ENCODE measurements at regions of chr9 and their contacts with region 1.

Region 1: DNA sequence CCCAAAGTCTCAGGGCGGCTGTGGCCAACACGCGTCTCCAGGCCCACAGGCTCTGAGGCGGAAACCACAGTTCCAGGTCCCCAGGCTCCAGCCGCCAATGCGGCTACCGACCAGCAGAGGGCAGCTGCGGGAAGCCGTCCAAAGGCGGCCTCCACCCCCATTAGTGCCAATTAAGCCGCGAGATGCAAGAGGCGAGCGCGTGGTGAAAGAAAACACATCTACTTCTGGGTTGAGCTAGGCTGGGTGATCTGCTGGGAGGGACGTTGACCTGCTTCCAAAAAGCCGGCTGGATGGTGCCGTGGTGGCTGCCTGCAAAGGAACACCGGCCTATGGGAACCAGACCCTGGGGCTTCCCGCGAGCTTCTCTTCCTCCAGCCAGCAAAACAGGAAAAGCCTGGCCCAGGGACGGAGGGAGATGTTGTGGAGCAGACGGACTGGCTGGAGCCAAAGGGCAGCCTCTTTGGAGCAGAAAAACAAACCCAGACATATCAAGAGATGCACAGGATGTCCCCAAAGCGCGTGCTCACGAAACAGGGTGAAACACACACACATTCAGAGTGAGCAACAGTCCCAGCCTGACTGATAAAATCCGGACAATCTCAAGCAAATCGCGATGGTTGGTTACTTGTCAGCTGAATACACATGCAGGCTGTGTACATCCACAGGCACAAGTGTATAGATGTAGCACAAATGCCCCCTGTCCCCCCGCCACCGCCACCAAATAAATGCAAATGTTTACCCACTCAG is 187.1 kb upstream of the BRINP1 start:
- DNase-seq: peak; percentile 68
- H3K4me3 Mint-ChIP-seq: no peak overlapping the region
- H3K27ac Mint-ChIP-seq: no peak overlapping the region
- H3K4me1 Mint-ChIP-seq: peaks cover 3% of the 10 kb centered on the region
- H3K27me3 Mint-ChIP-seq: peaks cover 32% of the 10 kb centered on the region

Region 2: GRCh38 chr9:119810645-119811429 is 254.5 kb after region 1 on chr9:
- CTCF ChIA-PET with region 1: no interaction called
- intact Hi-C with region 1: no loop called
- DNase-seq: no peak
- H3K4me3 Mint-ChIP-seq: no peak overlapping the region
- H3K27ac Mint-ChIP-seq: no peak overlapping the region
- H3K4me1 Mint-ChIP-seq: no peaks in the 10 kb centered on the region
- H3K27me3 Mint-ChIP-seq: no peaks in the 10 kb centered on the region

Region 3: DNA sequence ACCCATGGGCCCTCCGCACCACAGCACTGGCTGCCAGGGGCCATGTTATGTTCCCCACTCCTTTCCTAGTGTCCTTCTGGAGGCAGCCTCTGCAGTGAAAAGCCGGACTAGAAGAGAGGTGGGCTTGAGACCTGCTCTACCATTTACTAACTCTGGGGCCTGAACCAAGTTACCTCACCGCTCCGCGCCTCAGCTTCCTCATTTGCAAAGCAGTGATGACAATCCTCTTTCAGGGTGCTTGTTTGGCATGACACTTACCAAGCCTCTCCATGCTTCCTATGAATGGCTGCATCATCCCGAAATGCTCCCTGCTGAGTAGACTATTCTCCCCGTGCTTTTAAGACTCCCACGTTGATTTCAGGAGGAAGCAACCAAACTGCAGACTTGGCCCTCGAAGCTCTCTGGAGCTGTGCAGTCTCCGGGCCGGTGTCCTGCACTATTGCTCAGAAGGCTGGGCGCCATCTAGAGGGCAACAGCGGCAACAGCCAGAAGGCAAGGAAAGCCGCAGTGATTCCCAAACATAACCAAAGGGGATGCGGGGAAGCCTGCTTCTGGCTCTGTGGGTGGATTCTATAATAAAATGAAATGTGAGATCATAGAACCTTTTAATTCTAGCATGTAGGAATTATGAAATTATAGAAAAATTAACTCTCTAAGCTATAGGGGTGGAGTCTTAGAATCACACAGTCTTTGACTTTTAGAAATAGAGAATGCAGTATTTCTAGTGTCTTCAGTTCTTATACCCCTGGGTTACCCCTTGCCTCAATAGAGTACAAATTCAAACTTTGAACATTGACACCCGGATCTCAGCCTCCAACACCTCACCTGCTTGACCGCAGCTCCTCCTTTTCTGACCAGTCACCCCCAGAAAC is 412.8 kb after region 1 on chr9:
- CTCF ChIA-PET with region 1: interaction called, 3 read pairs
- intact Hi-C with region 1: loop called (anchors 1 kb)
- DNase-seq: peak; percentile 64
- H3K4me3 Mint-ChIP-seq: no peak overlapping the region
- H3K27ac Mint-ChIP-seq: no peak overlapping the region
- H3K4me1 Mint-ChIP-seq: no peaks in the 10 kb centered on the region
- H3K27me3 Mint-ChIP-seq: peaks cover 7% of the 10 kb centered on the region

Region 4: GRCh38 chr9:120477521-120478001 is 921.3 kb after region 1 on chr9:
- CTCF ChIA-PET with region 1: no interaction called
- intact Hi-C with region 1: loop called (anchors 5 kb)
- DNase-seq: peak; percentile 59
- H3K4me3 Mint-ChIP-seq: no peak overlapping the region
- H3K27ac Mint-ChIP-seq: no peak overlapping the region
- H3K4me1 Mint-ChIP-seq: peaks cover 3% of the 10 kb centered on the region
- H3K27me3 Mint-ChIP-seq: no peaks in the 10 kb centered on the region